HEK293 (cell line): ENCODE measurements at regions of chr1 and their contacts with region 1.

Region 1: GRCh38 chr1:30379684-30380624 is 343.4 kb downstream of the MATN1 start:
- H3K4me3 ChIP-seq: no peak overlapping the region
- H3K27ac ChIP-seq: no peak overlapping the region
- H3K4me1 ChIP-seq: no peaks in the 10 kb centered on the region
- CTCF ChIP-seq: peak; percentile 76

Region 2: DNA sequence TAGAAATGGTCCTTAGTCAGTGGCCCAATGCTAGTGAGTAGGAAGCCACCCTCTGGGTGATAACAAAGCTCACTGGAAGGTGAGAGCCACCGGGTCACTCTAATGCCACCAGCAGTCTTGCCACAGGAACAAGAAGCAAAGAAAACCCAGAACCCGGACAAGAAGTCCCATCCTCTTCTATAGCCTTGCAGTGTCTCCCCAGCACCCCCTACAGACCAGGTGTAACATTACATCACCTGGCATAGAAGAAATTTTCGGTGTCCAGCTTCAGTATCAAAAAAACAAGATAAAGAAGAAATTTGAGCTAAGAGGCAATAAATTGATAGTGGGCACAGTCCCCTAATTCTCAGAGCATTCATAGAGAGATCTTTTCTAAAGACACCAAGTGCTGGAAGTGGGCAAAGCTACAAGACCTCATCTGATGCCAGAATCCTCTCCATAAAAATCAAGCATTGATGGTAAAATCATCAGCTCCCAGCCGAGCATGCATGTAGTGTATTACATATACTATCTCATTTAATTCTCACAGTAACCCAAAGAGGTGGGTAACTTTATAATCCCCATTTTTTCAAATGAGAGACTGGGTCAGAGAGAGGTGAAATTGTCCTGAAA is 147.6 kb before region 1 on chr1:
- CTCF ChIA-PET with region 1: interaction called, 11 read pairs
- POLR2A ChIA-PET with region 1: no interaction called
- H3K4me3 ChIP-seq: no peak overlapping the region
- H3K27ac ChIP-seq: no peak overlapping the region
- H3K4me1 ChIP-seq: no peaks in the 10 kb centered on the region
- CTCF ChIP-seq: no peak

Region 3: DNA sequence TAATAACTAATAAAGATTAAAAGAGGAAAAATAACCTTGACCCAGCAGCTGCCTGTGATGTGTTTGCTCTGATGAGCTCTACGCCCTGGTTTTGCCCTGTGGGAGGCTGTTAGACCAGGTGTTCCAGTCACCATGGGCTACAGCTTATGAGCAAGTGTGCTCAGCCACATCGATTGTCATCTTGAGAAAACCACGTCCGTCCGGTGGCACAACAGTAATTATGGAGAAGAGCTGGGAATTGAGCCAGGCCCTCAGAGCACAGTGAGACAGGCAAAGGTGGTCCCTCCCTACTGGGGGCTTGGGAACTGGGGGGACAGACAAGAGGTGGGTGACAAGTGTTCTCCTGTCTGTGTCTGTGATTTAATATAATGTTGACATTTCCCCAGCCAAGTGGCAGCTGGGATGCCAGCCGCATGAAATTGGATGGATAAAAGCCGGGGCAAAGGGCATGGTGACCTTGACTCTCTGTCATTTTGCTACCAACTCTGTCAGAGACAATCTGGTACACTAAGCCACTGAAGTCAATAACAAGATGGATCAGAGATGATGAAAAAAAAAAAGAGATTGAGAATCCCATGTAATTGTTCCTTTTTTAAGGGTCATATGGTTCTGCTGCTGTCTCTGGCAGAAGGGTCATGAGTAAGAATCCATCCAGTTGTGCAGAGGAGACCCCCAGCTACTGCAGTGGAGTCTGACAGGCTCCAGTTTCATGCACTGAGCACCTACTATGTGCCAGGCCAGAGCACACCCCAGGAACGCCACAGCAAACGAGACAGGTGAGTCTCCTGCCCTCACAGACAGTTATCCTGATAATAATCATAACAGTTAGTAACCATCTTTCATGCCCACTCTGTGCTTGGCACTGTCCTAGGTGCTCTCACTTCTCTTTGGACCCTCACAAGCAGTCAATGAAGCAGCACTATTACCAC is 76.8 kb before region 1 on chr1:
- CTCF ChIA-PET with region 1: no interaction called
- POLR2A ChIA-PET with region 1: no interaction called
- H3K4me3 ChIP-seq: no peak overlapping the region
- H3K27ac ChIP-seq: no peak overlapping the region
- H3K4me1 ChIP-seq: no peaks in the 10 kb centered on the region
- CTCF ChIP-seq: no peak

Region 4: DNA sequence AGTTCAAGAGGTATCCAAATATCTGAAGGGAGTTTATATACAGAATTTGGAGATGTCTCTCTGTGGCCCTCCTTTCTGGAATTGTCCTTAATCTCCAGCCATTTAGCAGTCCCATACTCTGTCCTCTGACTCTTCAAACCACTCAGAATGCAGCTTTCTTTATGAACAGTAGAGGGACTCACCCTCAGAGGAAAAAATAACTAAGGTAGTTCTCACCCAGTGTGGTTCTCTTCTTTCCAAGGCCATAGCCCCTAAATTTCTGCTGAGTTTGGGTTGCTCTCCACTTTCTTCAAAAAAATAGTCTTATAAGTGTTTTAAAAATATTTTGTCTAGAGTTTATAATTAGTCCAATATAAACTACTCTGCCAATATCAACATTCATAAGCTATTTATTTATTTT is 26.3 kb before region 1 on chr1:
- CTCF ChIA-PET with region 1: interaction called, 14 read pairs
- POLR2A ChIA-PET with region 1: no interaction called
- H3K4me3 ChIP-seq: no peak overlapping the region
- H3K27ac ChIP-seq: no peak overlapping the region
- H3K4me1 ChIP-seq: no peaks in the 10 kb centered on the region
- CTCF ChIP-seq: no peak

Region 5: DNA sequence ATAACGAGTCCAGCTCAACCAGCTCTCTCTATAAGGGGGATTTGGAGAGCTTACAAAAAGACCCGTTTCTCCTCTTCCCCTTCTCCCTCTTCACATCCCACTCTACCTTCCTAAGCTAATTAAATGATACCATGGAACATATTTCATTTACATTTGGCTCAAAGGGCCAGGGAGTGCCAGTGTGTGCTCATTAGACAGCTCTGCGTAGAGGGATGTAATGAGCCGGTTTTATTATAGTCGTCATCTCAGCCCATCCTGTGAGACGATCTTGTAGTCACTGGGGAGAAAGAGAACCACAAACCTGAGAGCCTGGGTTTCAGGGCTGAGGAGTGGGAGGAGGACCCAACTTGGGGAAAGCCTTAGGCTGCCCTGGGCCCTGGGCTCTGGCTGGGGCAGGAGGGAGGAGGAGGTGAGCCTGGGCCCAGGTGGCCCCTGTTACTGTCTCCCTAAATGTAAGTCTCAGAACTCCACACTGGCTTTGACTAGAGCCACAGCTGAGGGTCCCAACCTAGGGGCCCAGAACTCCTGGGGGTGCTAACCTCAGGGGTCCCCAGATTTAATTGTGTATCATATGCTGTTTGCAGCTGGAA is 11.2 kb before region 1 on chr1:
- CTCF ChIA-PET with region 1: interaction called, 26 read pairs
- POLR2A ChIA-PET with region 1: no interaction called
- H3K4me3 ChIP-seq: no peak overlapping the region
- H3K27ac ChIP-seq: no peak overlapping the region
- H3K4me1 ChIP-seq: no peaks in the 10 kb centered on the region
- CTCF ChIP-seq: no peak

Region 6: DNA sequence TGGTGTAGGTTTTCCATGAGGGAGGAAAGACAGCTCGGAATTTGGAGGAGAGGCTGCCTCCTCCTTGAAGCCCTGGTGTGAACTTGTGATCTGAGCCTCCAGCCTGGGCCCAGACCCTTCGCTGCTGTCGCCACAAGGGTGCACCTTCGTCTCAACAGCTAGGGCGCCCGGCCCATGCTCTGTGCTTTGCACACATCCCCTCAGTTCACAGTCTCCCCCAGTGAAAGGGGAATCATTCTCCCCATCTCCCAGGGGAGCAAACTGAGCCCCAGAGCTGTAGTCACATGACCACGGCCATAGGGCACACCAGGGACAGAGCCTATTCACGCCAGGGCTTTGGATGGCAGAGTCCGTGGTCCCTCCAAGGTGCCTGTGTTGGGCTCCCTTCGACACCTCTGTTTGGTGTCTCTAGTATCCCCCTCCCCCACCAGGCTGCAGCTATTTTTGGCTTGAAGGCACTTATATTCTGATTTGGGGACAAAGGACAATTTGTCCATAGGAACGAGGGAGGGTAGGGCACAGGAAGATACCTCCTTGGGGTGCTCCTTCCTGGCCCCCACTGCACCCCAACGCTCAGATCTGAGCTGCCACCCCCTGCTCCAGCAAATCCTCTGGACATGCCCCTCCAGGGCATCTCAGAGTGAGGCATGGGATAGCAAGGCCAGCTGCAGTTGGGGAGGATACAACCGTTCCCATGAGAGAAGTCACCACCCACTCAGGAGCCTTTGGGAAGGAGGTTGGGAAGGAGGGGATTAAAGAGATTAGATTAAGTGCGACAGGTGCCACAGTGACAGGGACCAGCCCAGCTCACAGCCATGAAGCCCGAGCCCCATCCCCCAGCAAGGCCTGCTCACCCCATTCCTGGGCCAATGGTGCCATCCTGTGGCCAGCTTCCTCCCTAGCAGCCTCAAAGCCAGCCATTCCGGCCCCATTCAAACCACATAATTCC is 327.7 kb after region 1 on chr1:
- CTCF ChIA-PET with region 1: interaction called, 17 read pairs
- POLR2A ChIA-PET with region 1: no interaction called
- H3K4me3 ChIP-seq: no peak overlapping the region
- H3K27ac ChIP-seq: no peak overlapping the region
- H3K4me1 ChIP-seq: no peaks in the 10 kb centered on the region
- CTCF ChIP-seq: peak; percentile 95

Region 7: GRCh38 chr1:30966690-30967369 is 586.9 kb after region 1 on chr1:
- CTCF ChIA-PET with region 1: no interaction called
- POLR2A ChIA-PET with region 1: no interaction called
- H3K4me3 ChIP-seq: no peak overlapping the region
- H3K27ac ChIP-seq: 0 out of 2 replicates have a peak overlapping the region, but pooled peaks have one; percentile 13
- H3K4me1 ChIP-seq: peaks cover 9% of the 10 kb centered on the region; the same call in 1 of the 2 replicates
- CTCF ChIP-seq: no peak